Activated naive CD4-positive, alpha-beta T cell treated with anti-CD3 and anti-CD28 coated beads, Interleukin-2, amount 10 ng/mL, durations not matched to agents 7 days and 5 days (primary cell): ENCODE measurements at regions of chr6 and their contacts with region 1.

Region 1: DNA sequence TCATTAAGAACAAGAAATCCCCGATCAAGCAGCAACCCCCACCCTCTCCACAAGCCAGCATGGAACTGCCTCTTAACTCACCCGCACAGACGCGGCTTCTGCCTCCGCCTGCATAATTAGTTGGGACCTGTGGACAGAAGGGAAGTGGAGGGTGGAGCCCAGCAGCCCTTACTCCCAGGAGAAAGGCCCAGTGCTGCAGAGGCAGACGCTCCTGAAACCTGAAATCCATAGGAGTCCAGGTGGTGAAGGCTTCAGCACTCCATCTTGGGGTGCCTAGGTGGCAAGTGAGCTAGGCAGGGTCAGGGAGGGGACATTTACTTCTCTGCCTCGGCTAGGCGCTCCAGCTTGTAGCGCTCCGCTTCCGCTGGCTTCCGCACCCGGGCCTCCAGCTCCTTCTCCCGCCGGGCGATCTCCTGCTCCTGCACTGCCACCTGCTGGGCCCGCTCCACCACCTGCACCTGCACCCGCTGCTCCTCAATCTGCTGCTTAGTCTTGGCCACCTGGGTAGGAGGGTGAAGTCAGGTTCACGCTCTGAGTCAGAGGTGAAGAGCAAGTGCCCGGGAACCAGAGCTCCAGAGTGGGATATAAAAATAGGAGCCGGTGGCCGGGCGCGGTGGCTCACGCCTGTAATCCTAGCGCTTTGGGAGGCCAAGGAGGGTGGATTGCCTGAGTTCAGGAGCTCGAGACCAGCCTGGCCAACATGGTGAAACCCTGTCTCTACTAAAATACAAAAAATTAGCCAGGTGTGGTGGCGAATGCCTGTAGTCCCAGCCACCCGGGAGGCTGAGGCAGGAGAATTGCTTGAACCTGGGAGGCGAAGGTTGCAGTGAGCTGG is 10.7 kb downstream of the TUBB start:
- DNase-seq: peak; percentile 92
- H3K4me3 Mint-ChIP-seq: peak overlapping the region; percentile 26
- H3K27ac Mint-ChIP-seq: peak overlapping the region; percentile 78
- H3K4me1 Mint-ChIP-seq: peaks cover 65% of the 10 kb centered on the region
- H3K27me3 Mint-ChIP-seq: no peaks in the 10 kb centered on the region

Region 2: DNA sequence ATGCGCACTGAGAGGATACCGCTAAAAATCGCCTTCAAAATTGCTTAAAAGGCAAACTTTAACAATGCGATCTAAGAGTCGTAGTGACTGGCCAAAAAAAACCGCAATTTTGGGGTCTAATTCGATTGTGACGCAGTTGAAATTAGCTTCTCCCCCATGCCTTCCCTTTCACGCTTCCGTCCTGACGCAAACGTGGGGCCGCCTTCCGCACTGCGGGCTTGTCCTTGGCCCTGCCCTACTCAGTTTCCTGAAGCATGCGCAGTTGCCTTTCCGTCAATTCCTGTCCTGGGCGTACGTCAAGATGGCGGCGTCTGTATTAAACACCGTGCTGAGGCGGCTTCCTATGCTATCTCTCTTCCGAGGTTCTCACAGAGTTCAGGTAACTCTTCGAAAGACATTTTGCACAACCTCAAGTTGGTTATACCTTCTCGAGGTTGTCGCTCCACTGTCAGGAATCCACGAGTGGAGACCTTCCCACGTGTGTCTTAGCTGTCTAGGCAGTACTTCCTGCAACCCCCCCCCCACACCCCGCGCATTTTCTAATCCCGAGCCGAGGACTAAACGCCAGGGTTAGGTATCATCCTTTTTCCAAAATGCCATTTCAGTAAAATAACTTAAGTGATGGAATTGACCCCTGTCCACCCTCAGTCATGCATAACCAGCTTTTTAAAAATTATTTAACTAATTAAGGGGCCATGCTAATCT is 113.1 kb before region 1 on chr6 and contains the start of gene MRPS18B:
- CTCF ChIA-PET with region 1: interaction called, 19 read pairs
- DNase-seq: peak; percentile 99
- H3K4me3 Mint-ChIP-seq: peak within 1 kb of the TSS; percentile 93
- H3K27ac Mint-ChIP-seq: peak within 1 kb of the TSS; percentile 99
- H3K4me1 Mint-ChIP-seq: peaks cover 40% of the 10 kb centered on the region
- H3K27me3 Mint-ChIP-seq: peaks cover 5% of the 10 kb centered on the region

Region 3: DNA sequence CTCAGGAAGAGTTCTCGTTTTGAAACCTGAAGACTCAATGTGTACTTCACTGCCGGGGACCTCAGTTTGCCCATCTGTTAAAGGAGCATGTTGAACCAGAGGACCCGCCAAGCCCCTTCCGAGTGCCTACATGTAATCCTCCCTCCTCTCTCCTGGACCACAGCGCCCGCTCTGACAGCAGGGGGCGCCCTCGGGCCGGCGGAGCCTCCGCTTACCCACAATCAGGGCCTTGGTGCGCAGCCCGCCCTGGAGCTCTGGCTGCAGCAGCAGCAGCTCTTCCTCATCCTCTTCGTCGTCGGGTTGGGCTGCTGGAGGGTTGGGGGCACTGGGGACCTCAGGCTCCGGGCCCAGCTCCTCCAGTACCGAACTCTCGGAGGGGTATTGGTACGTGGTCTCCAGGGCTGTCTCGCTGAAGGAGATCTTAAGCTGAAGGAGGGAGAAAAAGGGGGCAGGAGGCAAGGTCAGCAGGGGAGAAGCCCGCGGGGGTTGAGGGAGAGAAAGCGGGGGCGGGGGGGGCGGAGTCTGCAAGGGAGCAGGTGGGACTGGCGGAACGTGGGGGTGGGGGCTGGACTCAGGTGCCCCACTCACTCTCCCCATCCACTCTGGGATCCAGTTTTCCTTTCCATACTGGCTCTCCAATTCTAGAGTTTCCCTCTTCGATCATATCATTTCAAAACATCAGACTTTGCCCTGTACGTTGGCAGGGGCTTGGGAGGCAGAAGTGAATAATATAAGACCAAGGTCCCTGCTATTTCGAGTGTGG is 51.7 kb before region 1 on chr6:
- CTCF ChIA-PET with region 1: interaction called, 285 read pairs
- DNase-seq: peak; percentile 93
- H3K4me3 Mint-ChIP-seq: peak overlapping the region; percentile 99
- H3K27ac Mint-ChIP-seq: peak overlapping the region; percentile 80
- H3K4me1 Mint-ChIP-seq: peaks cover 40% of the 10 kb centered on the region
- H3K27me3 Mint-ChIP-seq: no peaks in the 10 kb centered on the region

Region 4: GRCh38 chr6:30821862-30822782 is 91.3 kb after region 1 on chr6:
- CTCF ChIA-PET with region 1: interaction called, 10 read pairs
- DNase-seq: no peak
- H3K4me3 Mint-ChIP-seq: no peak overlapping the region
- H3K27ac Mint-ChIP-seq: no peak overlapping the region
- H3K4me1 Mint-ChIP-seq: peaks cover 61% of the 10 kb centered on the region
- H3K27me3 Mint-ChIP-seq: no peaks in the 10 kb centered on the region

Region 5: DNA sequence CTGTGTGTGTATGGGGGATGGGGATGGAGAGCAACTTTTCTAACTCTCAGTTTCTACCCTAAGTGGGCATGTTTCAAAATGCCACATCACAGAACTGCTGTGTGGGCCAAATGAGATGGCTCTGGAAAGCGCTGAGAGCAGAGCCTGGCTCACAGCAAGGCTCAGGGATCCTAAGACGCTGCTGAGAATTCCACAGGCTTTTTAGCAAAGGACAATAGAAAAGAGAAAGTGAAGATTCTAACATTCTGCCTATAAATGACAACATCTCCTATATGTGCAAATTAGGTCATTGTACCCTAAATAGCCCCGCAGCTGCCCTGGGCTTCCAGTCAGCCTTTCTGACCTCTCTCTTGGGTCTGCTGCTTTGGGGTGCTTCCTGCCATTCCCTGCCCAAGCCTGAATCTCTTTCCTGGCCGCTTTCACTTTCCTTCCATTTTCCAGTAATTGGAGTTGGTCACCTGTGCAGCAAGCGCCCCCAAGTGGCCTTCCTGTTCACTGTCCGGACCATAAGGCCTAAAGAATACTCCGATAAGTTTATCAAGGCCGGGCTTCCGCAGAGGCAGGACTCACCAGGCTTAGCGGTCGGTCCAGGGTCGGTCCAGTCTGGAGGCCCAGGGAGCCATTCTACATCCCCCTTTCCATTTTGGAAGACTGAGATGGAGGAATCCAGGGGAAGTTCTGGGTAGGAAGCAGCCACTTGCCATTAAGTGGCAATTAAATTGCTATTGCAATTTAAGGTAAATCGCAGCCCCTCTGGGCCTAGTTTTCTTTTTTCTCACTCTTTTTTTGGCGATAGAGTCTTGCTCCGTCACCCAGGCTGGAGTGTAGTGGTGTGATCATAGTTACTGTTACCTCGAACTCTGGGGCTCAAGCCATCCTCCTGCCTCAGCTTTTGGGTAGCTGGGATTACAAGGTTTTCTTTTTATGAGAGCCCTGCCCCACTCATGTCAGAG is 146.9 kb after region 1 on chr6:
- CTCF ChIA-PET with region 1: interaction called, 12 read pairs
- DNase-seq: peak; percentile 84
- H3K4me3 Mint-ChIP-seq: peak overlapping the region; percentile 50
- H3K27ac Mint-ChIP-seq: peak overlapping the region; percentile 79
- H3K4me1 Mint-ChIP-seq: peaks cover 26% of the 10 kb centered on the region
- H3K27me3 Mint-ChIP-seq: peaks cover 23% of the 10 kb centered on the region